Transverse colon (tissue), 4 donors: ENCODE measurements at regions of chr1 and their contacts with region 1.

Region 1: DNA sequence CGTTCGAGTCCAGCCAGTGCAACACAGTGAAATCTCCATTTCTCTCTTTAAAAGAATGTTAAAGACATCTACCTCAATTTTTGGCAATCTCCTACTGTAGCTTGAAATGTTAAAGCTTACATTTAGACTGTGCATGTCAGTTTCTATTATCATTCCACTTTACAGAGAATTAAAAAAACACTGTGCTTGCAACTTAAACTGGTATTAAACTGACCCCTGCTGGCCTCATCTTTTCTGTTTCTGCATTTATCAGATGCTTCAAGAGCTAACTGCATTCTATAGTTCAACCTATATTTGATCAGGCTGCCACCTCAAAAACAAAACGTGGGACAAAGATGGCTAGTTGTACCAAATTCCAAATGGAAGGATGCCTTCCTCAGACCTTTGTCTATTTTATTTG is 226.5 kb downstream of the SMYD3 start:
- DNase-seq: no peak
- H3K4me3 ChIP-seq: no peak overlapping the region
- H3K27ac ChIP-seq: no peak overlapping the region
- H3K4me1 ChIP-seq: no peaks in the 10 kb centered on the region
- H3K27me3 ChIP-seq: no peaks in the 10 kb centered on the region
- CTCF ChIP-seq: peak in 4 of 5 experiments; percentile 8 to 27 (median 16)
- EP300 ChIP-seq: no peak
- POLR2A ChIP-seq: no peak

Region 2: DNA sequence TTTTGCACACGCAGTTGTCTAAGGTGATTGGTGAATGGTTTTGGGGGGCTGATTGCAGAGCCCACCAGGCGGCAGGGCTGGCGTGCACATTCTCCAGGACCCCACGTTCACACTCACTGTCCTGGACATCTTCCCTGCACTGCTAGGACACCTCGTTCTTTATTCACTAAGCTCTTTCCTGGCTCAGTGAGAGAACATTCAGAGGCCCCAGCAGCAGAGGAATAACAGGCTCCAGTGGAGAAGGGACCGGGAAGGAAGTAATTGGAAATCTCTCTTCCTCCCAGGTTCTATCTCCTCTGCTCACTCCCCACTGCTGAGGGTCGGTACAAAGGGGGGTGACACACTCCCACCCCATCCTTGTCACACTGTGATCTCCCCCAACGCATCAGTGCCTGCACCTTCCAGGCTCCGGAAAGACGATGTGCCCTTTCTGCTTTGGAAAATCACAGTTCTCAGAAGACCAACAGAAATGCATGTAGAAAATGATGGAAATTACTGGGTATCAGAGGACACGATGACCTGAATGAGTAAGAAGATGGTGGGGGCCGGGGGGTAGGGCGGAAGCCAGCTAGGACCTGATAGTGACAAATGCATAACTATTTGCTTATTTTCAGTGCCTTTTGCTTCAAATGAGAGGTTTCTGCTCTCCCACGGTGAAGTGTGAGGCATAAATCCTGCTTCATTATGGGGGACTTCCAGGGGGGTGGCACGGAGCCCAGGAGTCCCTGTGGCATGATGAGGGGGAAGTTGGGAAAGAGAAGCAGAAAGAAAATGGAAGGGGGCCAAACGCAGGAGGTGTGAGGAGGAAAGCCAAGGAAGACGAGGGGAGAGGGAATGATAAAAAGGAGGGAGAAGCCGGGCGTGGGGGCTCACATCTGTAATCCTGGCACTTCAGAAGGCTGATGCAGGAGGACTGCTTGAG is 1151.0 kb before region 1 on chr1:
- in situ Hi-C with region 1: loop called in 1 of 4 experiments (anchors 25 kb)
- intact Hi-C with region 1: no loop called
- DNase-seq: no peak
- H3K4me3 ChIP-seq: no peak overlapping the region
- H3K27ac ChIP-seq: no peak overlapping the region
- H3K4me1 ChIP-seq: no peaks in the 10 kb centered on the region
- H3K27me3 ChIP-seq: peaks cover 35% of the 10 kb centered on the region
- CTCF ChIP-seq: no peak
- EP300 ChIP-seq: no peak
- POLR2A ChIP-seq: no peak

Region 3: DNA sequence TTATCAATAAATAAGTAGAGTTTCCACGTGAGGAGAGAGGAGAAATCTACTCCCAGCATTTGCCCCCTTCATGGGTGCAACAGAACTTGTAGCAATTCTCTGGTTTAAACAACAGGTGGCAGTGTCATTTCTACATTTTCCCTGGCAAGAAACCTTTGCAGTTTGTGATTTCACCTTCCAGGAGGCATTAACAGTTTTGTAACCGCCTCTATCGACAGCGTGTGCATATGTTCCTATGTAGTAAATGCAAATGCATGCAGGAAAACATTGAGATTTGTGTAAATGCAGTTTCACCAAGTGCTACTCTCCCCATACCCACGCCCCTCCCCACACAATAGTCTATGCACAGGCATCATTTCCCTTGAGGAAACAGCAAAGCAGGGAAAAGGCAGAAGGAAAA is 268.2 kb before region 1 on chr1:
- in situ Hi-C with region 1: no loop called
- intact Hi-C with region 1: loop called (anchors 10 kb)
- DNase-seq: no peak
- H3K4me3 ChIP-seq: no peak overlapping the region
- H3K27ac ChIP-seq: no peak overlapping the region
- H3K4me1 ChIP-seq: no peaks in the 10 kb centered on the region
- H3K27me3 ChIP-seq: no peaks in the 10 kb centered on the region
- CTCF ChIP-seq: peak; percentile 49 to 63 (median 59)
- EP300 ChIP-seq: no peak
- POLR2A ChIP-seq: no peak